Keratinocyte (primary cell): ENCODE measurements at regions of chr1 and their contacts with region 1.

Region 1: DNA sequence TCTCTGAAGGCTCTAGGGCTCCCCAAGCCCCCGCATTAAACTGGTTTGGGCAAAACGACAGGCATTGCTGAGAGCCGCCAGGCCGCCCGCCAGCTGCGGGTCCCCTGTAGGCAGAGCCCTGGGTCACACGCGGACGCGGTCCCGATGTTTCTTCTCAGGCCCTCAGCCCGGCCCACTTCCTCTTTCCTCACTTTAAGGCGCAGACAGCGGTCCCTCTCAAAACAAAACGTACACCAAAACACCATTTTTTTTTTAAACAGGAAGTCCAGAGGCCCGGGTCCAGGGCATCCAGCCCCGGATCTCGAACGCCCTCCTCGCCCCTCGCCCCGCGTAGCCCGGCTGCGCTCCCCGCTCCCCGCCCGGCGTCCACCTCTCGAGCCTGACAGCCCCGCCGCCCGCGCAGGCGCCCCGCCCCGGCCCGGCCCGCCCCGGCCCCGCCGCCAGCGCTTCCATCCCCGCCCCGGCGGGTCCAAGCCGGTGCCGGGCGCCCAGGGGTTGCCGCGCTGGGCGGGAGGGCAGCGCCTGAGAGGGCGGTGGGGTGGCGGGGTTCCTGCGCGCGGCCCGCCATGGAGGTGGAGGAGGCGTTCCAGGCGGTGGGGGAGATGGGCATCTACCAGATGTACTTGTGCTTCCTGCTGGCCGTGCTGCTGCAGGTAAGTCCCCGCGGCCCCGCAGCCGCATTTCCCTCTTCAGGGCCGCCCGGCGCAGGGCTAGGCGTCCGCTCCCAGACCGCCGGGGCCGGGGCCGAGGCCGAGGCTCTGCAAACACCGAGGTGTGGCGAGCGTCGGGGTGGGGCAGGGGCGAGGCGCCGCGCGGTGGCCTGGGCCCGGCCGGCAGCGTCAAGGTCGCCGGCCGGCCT is at the start of gene SLC22A15:
- DNase-seq: no peak
- H3K4me3 ChIP-seq: peak within 1 kb of the TSS; percentile 68 to 76 (median 73)
- H3K27ac ChIP-seq: peak within 1 kb of the TSS; percentile 92
- H3K4me1 ChIP-seq: peaks cover 30% of the 10 kb centered on the region
- H3K27me3 ChIP-seq: no peaks in the 10 kb centered on the region
- CTCF ChIP-seq: no peak
- polyA plus RNA-seq, gene SLC22A15: 9.3 to 16.3 TPM (median 14.9 TPM) in 3 replicates

Region 2: DNA sequence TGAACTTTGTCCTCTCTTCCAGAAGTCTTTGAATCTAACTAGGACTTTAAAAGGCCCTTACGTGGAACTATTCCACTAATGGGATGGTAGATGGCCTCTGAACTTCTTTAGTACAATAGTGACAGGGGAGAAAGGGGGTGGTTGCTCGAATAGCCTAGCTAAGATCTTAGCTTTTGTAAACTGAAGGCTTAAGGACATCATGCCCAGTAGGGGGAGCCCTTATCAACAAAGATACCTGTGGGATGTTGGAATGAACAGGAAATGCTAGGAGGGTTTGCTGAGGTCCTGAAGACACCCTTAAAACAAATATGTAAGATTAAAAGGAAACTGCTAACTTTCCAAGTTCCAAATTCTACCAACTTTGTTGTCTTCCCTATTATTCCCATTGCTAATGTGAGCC is 168.6 kb before region 1 on chr1:
- dilution Hi-C with region 1: loop called (anchors 25 kb)
- DNase-seq: no peak
- H3K4me3 ChIP-seq: no peak overlapping the region
- H3K27ac ChIP-seq: no peak overlapping the region
- H3K4me1 ChIP-seq: peaks cover 5% of the 10 kb centered on the region
- H3K27me3 ChIP-seq: no peaks in the 10 kb centered on the region
- CTCF ChIP-seq: peak; percentile 66 to 74 (median 69)

Region 3: GRCh38 chr1:116067566-116067890 is 91.2 kb after region 1 on chr1:
- dilution Hi-C with region 1: no loop called
- DNase-seq: no peak
- H3K4me3 ChIP-seq: no peak overlapping the region
- H3K27ac ChIP-seq: peak overlapping the region; percentile 90
- H3K4me1 ChIP-seq: peaks cover 12% of the 10 kb centered on the region
- H3K27me3 ChIP-seq: no peaks in the 10 kb centered on the region
- CTCF ChIP-seq: no peak

Region 4: DNA sequence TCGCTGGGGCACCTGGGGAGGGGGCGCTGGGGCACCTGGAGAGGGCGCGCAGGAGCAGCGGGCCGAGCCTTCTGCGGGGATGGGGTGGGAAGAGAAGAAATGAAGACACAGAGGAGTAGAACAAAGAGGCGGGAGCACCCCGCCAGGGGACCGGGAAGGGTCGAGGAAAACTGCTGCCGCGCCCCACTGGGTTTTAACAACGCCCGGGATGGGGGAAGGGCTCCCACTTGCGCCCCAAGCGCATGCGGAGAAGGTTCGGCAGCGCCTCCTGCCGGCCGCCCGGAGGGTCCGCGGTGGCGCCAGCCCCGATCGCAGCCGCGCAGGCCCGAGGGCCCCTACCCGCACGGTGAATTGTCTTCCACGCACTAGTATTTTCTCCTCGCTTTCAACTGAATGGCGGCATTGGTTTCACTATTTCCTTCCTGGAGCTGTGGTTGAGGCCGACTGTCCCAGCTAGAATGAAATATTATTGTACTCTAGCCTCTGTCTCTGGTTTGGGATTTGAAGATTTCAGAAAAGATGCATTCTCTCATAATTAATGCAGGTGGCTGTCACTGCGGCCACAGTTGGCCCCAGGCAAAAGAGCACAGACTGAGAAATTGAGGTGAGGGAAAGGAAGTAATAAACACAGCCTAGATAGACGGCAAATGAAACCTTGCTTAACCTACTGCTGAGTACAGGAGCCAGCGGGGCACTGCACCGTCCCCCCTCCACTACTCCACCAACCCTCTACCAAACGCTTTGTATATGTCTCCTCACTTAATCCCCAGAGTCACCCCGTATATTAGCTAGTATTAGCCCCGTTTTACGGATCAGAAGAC is 192.2 kb after region 1 on chr1:
- dilution Hi-C with region 1: no loop called
- DNase-seq: no peak
- H3K4me3 ChIP-seq: peak overlapping the region; percentile 35 to 58 (median 58)
- H3K27ac ChIP-seq: no peak overlapping the region
- H3K4me1 ChIP-seq: peaks cover 5% of the 10 kb centered on the region
- H3K27me3 ChIP-seq: no peaks in the 10 kb centered on the region
- CTCF ChIP-seq: peak; percentile 80 to 95 (median 90)